ENCODE measurements at regions of chr7 and their contacts with region 1.

Region 1: GRCh38 chr7:50335795-50336754 is 31.6 kb downstream of the IKZF1 start:
- DNase-seq: peak; percentile 87
- H3K4me3 Mint-ChIP-seq: no peak overlapping the region
- H3K27ac Mint-ChIP-seq: no peak overlapping the region
- H3K4me1 Mint-ChIP-seq: no peaks in the 10 kb centered on the region
- H3K27me3 Mint-ChIP-seq: no peaks in the 10 kb centered on the region

Region 2: DNA sequence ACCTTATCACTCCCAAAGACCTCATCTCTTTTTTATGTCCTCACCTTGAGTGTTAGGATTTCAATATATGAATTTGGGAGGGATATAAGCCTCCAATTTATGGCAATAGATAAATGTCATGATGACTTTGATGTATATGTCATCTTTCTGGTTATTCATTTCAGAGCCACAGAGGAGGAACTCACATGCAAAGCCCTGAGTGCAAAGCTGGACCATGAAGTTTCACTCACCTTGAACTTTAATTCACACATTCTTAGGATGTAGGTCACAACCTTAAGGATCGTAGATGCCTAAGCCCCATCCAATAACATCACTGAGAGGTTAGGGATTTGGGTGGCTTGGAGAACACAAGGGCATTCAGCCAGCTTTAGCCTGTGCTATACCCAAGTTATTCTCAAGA is 161.1 kb before region 1 on chr7:
- CTCF ChIA-PET with region 1: no interaction called
- POLR2A ChIA-PET with region 1: no interaction called
- DNase-seq: no peak
- H3K4me3 Mint-ChIP-seq: no peak overlapping the region
- H3K27ac Mint-ChIP-seq: no peak overlapping the region
- H3K4me1 Mint-ChIP-seq: no peaks in the 10 kb centered on the region
- H3K27me3 Mint-ChIP-seq: peaks cover 19% of the 10 kb centered on the region

Region 3: DNA sequence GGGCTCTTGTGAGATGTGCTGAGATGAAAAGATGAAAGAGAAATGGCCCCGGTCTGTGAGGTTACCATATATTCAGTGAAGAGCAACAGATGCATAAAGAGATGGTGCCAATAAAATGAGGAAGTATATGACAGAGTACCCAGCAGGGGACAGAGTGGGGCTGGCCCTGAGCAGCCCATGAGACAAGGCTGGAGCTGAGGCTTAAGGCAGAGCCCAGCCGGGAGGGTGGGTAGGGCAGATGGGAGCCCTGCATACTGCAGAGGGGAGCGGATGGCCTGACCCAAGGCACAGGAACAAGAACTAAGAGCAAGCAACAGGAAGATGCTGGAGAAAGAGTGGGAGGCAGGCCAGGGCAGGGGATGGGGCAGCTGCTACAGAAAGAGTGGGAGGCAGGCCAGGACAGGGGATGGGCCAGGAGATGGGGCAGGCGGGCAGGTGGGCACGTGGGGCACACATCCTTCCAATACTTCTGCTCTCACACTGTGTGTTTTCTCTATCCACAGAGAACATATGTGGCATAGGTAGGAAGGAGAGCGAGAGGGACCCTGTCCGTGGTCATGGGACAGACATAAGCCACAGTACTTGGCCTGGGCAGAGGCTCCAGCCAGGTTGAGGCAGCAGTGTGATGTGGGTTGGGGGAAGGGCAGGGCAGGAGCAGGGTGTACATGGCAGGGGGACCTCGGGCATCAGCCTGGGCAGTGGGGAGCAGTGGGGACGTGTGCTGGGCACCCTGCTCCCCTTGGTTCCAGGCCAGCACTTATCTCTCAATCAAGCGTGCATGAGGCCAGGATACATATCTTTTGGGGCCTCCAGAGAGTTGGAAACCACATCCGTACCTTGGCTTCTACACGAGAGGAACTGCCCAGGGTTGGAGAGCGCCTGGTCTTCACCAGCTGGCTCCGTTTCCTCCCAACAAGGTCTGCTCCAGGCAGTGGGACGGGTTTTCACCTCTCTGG is 123.1 kb before region 1 on chr7:
- CTCF ChIA-PET with region 1: no interaction called
- POLR2A ChIA-PET with region 1: interaction called, 14 read pairs
- DNase-seq: peak; percentile 57
- H3K4me3 Mint-ChIP-seq: peak overlapping the region; percentile 15
- H3K27ac Mint-ChIP-seq: peak overlapping the region; percentile 83
- H3K4me1 Mint-ChIP-seq: peaks cover 91% of the 10 kb centered on the region
- H3K27me3 Mint-ChIP-seq: no peaks in the 10 kb centered on the region

Region 4: DNA sequence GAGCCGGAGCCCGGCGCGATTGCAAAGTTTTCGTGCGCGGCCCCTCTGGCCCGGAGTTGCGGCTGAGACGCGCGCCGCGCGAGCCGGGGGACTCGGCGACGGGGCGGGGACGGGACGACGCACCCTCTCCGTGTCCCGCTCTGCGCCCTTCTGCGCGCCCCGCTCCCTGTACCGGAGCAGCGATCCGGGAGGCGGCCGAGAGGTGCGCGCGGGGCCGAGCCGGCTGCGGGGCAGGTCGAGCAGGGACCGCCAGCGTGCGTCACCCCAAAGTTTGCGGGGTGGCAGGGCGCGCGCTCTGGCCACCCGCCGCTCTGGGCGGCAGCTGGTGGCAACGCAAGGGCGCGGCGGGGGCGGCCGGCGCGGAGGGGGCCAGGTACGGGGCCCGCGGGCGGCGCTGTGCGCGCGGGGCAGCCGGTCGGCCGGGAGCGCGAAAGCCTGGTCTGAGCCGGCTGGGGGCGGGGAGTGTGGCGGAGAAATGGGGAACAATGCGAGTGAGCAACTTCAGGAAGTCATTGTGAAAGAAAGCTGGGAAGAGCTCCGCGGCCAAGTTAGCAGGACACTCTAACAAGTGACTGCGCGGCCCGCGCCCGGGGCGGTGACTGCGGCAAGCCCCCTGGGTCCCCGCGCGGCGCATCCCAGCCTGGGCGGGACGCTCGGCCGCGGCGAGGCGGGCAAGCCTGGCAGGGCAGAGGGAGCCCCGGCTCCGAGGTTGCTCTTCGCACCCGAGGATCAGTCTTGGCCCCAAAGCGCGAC is 31.7 kb before region 1 on chr7 and contains the start of gene IKZF1:
- CTCF ChIA-PET with region 1: interaction called, 13 read pairs
- POLR2A ChIA-PET with region 1: interaction called, 1,125 read pairs
- DNase-seq: peak; percentile 58
- H3K4me3 Mint-ChIP-seq: peak within 1 kb of the TSS; percentile 88
- H3K27ac Mint-ChIP-seq: peak within 1 kb of the TSS; percentile 99
- H3K4me1 Mint-ChIP-seq: peaks cover 29% of the 10 kb centered on the region
- H3K27me3 Mint-ChIP-seq: peaks cover 8% of the 10 kb centered on the region
- total RNA-seq, gene IKZF1: 383 to 404 TPM

Region 5: GRCh38 chr7:50324113-50324512 is 12.0 kb before region 1 on chr7:
- CTCF ChIA-PET with region 1: interaction called, 11 read pairs
- POLR2A ChIA-PET with region 1: interaction called, 1,125 read pairs
- DNase-seq: no peak
- H3K4me3 Mint-ChIP-seq: no peak overlapping the region
- H3K27ac Mint-ChIP-seq: peak overlapping the region; percentile 36
- H3K4me1 Mint-ChIP-seq: peaks cover 86% of the 10 kb centered on the region
- H3K27me3 Mint-ChIP-seq: no peaks in the 10 kb centered on the region

Region 6: GRCh38 chr7:50349963-50350944 is 14.2 kb after region 1 on chr7:
- CTCF ChIA-PET with region 1: interaction called, 27 read pairs
- POLR2A ChIA-PET with region 1: interaction called, 302 read pairs
- DNase-seq: peak; percentile 87
- H3K4me3 Mint-ChIP-seq: peak overlapping the region; percentile 62
- H3K27ac Mint-ChIP-seq: peak overlapping the region; percentile 92
- H3K4me1 Mint-ChIP-seq: peaks cover 97% of the 10 kb centered on the region
- H3K27me3 Mint-ChIP-seq: no peaks in the 10 kb centered on the region

Region 7: DNA sequence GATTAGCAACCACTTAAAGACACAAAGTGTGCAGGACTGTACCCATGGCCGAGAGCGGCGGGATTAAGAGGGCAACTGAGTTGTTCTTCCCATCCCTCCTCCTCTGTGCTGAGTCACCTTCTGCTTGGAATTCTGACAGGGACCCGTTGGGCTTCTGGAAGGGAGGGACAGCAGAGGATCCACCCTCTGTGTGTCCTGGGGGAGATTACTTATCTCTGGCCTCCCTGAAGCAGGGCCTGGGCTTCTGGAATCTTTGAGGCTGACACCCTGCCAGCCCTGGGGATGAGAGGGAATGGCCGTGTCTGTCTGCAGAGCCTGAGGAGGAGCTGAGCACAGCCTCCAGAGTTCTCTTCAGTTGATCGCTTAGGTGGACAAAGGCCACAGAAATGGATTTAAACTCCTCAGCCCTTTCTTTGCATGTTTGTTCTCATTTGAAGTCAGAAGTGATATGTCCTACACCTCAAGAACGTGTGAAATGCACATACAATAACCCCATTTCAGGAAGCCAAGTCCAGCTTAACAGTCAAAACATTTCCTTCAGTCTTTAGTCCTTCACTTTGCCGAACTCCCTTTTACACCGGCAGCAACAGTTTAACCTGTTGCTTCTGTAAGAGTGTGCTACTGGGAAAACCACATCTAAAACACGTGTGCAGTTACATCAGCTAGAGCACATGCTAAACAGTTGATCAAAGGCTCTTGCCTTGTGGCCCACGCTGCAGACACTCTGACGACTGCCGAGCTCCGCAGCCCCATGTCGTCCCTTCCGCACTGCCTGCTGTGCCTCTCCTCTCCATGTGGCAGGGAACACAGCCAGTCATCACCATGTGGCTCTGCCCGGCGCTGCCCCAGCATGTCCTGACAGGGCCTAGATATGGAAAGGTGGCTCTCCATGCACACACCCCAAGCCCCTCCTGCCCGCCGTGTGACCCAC is 24.2 kb after region 1 on chr7:
- CTCF ChIA-PET with region 1: interaction called, 19 read pairs
- POLR2A ChIA-PET with region 1: interaction called, 302 read pairs
- DNase-seq: peak; percentile 82
- H3K4me3 Mint-ChIP-seq: peak overlapping the region; percentile 53
- H3K27ac Mint-ChIP-seq: peak overlapping the region; percentile 96
- H3K4me1 Mint-ChIP-seq: peaks cover 98% of the 10 kb centered on the region
- H3K27me3 Mint-ChIP-seq: no peaks in the 10 kb centered on the region